HepG2 (cell line): ENCODE measurements at regions of chr3 and their contacts with region 1.

Region 1: DNA sequence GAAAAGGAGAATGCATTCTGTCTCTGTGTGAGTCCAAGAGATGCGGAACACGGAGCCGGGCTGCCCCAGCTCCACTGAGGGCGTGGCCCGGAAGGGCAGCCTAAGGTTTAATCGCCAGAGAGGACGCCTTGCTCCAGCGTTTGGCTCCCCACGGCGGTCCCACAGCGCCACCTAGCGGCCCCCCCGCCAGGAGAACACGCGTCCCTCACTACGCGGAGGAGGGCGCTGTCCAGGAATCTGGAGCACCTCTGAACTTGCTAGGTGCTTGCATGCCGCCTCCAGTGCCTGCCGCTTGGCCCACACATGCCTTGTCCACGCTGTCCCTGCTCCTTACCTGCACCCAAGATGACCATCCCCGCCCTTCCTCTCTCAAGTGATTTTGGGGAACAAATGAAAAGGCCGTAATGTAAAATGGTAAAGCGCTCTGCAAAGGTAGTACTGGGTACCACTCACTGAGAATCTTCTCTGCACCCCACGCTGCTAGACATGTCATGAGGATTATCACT is 14.4 kb upstream of the MRPS22 start:
- DNase-seq: peak; percentile 76
- ATAC-seq: peak; percentile 98
- H3K4me3 ChIP-seq: no peak overlapping the region; a peak in 1 of 6 replicates
- H3K27ac ChIP-seq: no peak overlapping the region
- H3K4me1 ChIP-seq: peaks cover 4% of the 10 kb centered on the region; the same call in 1 of the 2 replicates
- H3K27me3 ChIP-seq: peaks cover 4 to 28% of the 10 kb centered on the region in 2 experiments; a peak in 4 of 5 replicates
- CTCF ChIP-seq: peak; percentile 100
- EP300 ChIP-seq: no peak
- POLR2A ChIP-seq: no peak
- RAD21 ChIP-seq: peak; percentile 99

Region 2: GRCh38 chr3:138935848-138936740 is 393.3 kb before region 1 on chr3:
- CTCF ChIA-PET with region 1: interaction called, 15 read pairs
- POLR2A ChIA-PET with region 1: no interaction called
- in situ Hi-C with region 1: loop called (anchors 5 kb)
- intact Hi-C with region 1: loop called (anchors 1 kb)
- DNase-seq: peak; percentile 27
- ATAC-seq: peak; percentile 84
- H3K4me3 ChIP-seq: peak overlapping the region; percentile 22 to 71 (median 43)
- H3K27ac ChIP-seq: no peak overlapping the region
- H3K4me1 ChIP-seq: peaks cover 37% of the 10 kb centered on the region
- H3K27me3 ChIP-seq: peaks cover 20 to 64% of the 10 kb centered on the region in 2 experiments; a peak in 4 of 5 replicates
- CTCF ChIP-seq: peak; percentile 95
- EP300 ChIP-seq: no peak
- POLR2A ChIP-seq: no peak
- RAD21 ChIP-seq: peak; percentile 74

Region 3: DNA sequence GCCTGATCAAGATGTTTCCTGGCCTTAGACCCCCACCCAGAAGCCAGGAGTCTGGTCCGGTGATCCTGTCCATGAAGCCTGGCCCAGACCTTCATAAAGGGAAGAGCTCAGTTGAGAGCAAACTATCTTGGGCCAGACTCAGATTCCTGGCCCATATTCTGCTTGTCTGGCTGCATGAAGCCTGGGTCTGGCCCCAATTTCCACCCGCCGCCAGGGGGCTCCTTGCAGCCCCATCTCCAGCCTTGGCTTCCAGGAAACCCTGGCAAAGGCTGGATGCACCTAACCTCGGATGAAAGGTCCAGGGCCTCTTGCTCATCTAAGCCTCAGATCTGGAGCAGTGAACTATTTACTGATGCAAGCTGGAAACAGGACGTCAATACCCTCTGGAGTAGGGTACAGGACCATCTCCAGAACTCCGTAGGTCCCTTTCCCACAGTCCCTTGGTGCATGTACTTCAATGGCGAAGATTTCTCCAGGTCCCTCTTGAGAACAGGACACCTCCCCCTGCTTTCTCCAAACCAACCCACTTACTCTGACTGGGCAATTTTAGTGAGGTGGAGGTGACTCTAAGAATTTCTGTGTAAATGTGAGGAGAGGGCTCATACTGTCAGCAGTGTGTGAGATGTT is 388.0 kb before region 1 on chr3:
- CTCF ChIA-PET with region 1: interaction called, 15 read pairs
- POLR2A ChIA-PET with region 1: no interaction called
- in situ Hi-C with region 1: loop called (anchors 5 kb)
- intact Hi-C with region 1: loop called (anchors 1 kb)
- DNase-seq: peak; percentile 44
- ATAC-seq: peak; percentile 73
- H3K4me3 ChIP-seq: no peak overlapping the region
- H3K27ac ChIP-seq: no peak overlapping the region
- H3K4me1 ChIP-seq: peaks cover 27% of the 10 kb centered on the region
- H3K27me3 ChIP-seq: peaks cover 21 to 90% of the 10 kb centered on the region in 2 experiments
- CTCF ChIP-seq: peak; percentile 79
- EP300 ChIP-seq: no peak
- POLR2A ChIP-seq: no peak
- RAD21 ChIP-seq: peak; percentile 69

Region 4: DNA sequence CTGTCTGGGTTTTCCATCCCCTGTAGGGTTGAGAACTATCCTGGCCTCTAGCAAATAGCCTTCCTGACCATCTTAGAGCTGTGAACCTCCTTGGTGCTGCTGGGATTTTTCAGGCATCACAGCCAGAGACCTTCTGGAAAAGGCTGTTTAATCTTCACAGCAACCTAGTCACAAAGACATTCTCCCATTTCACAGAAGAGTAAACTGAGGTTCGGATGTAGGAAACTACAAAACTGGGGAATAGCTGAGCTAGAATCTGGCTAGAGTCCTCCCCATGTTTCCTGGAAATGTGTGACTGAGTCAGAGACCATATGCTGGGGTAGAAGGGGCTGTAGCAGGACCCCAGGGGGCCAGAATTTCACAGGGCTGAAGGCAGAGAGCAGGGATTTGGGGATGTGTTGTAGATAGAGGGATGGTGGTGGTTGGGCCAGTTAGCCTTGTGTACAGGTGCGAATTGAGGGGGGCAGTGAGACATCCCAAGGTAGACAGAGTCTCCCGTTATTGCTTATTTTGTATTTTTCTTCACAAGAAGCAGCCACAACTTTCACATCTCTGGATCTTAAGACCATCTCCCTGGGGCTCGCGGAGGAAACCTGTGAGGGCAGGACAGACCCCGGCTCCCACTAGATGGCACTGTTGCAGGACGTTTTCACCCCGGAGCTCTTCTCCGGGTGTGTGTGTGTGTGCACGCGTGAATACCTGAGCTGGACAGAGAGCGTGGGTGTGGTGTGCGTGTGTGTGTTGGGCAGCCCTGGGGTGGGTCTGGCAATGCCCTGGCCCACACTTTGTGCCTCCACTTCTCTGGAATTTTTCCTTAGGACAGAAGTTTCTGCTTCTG is 217.8 kb before region 1 on chr3:
- CTCF ChIA-PET with region 1: interaction called, 45 read pairs
- POLR2A ChIA-PET with region 1: no interaction called
- in situ Hi-C with region 1: loop called (anchors 5 kb)
- intact Hi-C with region 1: loop called (anchors 2 kb)
- DNase-seq: peak; percentile 12
- ATAC-seq: peak; percentile 84
- H3K4me3 ChIP-seq: no peak overlapping the region
- H3K27ac ChIP-seq: no peak overlapping the region
- H3K4me1 ChIP-seq: peaks cover 5% of the 10 kb centered on the region
- H3K27me3 ChIP-seq: peaks cover 0 to 24% of the 10 kb centered on the region in 2 experiments; a peak in 3 of 5 replicates
- CTCF ChIP-seq: peak; percentile 83
- EP300 ChIP-seq: no peak
- POLR2A ChIP-seq: no peak
- RAD21 ChIP-seq: peak; percentile 57

Region 5: DNA sequence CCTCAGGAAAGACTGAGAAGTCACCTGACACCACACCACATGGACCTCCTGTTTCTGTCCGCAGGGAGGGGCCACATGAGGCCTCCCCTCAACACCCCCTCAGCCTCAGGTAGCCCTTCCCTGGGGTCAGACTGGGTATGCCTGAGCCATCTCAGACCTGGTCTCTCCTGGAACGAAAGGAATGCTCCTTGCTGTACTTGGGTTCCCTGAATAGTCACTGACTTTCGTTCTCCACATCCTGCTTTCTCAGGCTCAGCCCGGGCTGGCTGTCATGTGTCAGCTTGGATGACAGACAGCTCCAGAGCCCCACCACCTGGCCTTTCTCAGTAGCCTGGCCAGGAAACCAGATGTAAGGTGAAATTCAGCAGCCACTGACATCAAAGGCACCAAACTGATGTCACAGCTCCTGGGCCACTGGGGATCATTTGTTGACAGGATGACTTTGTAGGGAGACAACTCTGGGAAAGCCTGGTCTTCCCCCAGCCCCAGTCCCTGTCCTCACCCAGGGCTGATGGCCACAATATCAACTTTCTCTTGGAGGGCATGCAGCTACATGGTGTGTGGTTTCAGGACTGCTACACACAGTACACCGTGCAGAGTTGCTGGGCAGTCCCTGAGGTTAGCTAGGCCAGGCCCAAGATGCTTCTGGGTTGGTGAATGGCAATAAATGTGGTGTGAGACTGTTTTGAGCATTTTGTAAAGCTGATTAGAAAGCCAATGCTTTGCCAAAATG is 127.0 kb before region 1 on chr3:
- CTCF ChIA-PET with region 1: no interaction called
- POLR2A ChIA-PET with region 1: no interaction called
- in situ Hi-C with region 1: no loop called
- intact Hi-C with region 1: loop called (anchors 10 kb)
- DNase-seq: peak; percentile 46
- ATAC-seq: peak; percentile 99
- H3K4me3 ChIP-seq: no peak overlapping the region; a peak in 1 of 6 replicates
- H3K27ac ChIP-seq: no peak overlapping the region
- H3K4me1 ChIP-seq: no peaks in the 10 kb centered on the region
- H3K27me3 ChIP-seq: no peaks in the 10 kb centered on the region
- CTCF ChIP-seq: peak; percentile 77
- EP300 ChIP-seq: no peak
- POLR2A ChIP-seq: no peak
- RAD21 ChIP-seq: no peak; the same call in 1 of the 2 replicates

Region 6: GRCh38 chr3:139284221-139284620 is 45.2 kb before region 1 on chr3:
- CTCF ChIA-PET with region 1: no interaction called
- POLR2A ChIA-PET with region 1: no interaction called
- in situ Hi-C with region 1: no loop called
- intact Hi-C with region 1: loop called (anchors 2 kb)
- DNase-seq: no peak
- ATAC-seq: no peak
- H3K4me3 ChIP-seq: no peak overlapping the region
- H3K27ac ChIP-seq: no peak overlapping the region
- H3K4me1 ChIP-seq: peaks cover 8% of the 10 kb centered on the region; the same call in 1 of the 2 replicates
- H3K27me3 ChIP-seq: peaks cover 0 to 1% of the 10 kb centered on the region in 2 experiments; a peak in 2 of 5 replicates
- CTCF ChIP-seq: no peak
- EP300 ChIP-seq: no peak
- POLR2A ChIP-seq: no peak
- RAD21 ChIP-seq: no peak